ENCODE measurements at regions of chr16 and their contacts with region 1.

Region 1: GRCh38 chr16:30592871-30593270 is 7.4 kb upstream of the ZNF785 start:
- DNase-seq: no peak
- ATAC-seq: no peak
- H3K4me3 ChIP-seq: no peak overlapping the region
- H3K4me3 Mint-ChIP-seq: no peak overlapping the region
- H3K27ac ChIP-seq: no peak overlapping the region
- H3K27ac Mint-ChIP-seq: no peak overlapping the region
- H3K4me1 ChIP-seq: no peaks in the 10 kb centered on the region
- H3K4me1 Mint-ChIP-seq: peaks cover 0 to 1% (median 0%) of the 10 kb centered on the region in 3 donors
- H3K27me3 ChIP-seq: no peaks in the 10 kb centered on the region
- H3K27me3 Mint-ChIP-seq: no peaks in the 10 kb centered on the region

Region 2: GRCh38 chr16:30335598-30336474 is 257.0 kb before region 1 on chr16:
- CTCF ChIA-PET with region 1: no interaction called
- POLR2A ChIA-PET with region 1: no interaction called
- DNase-seq: peak in 5 of 35 experiments; percentile 14 to 59 (median 16)
- ATAC-seq: no peak
- H3K4me3 ChIP-seq: peak overlapping the region; percentile 47 to 58
- H3K4me3 Mint-ChIP-seq: peak overlapping the region; percentile 83 to 92 (median 91)
- H3K27ac ChIP-seq: peak overlapping the region; percentile 63
- H3K27ac Mint-ChIP-seq: peak overlapping the region; percentile 86 to 87
- H3K4me1 ChIP-seq: peaks cover 9 to 13% of the 10 kb centered on the region in 2 experiments
- H3K4me1 Mint-ChIP-seq: peaks cover 26 to 35% (median 26%) of the 10 kb centered on the region in 3 donors
- H3K27me3 ChIP-seq: no peaks in the 10 kb centered on the region
- H3K27me3 Mint-ChIP-seq: no peaks in the 10 kb centered on the region

Region 3: GRCh38 chr16:30466766-30467165 is 126.1 kb before region 1 on chr16:
- CTCF ChIA-PET with region 1: no interaction called
- POLR2A ChIA-PET with region 1: interaction called in 1 of 2 experiments, 10 read pairs
- DNase-seq: no peak
- ATAC-seq: no peak
- H3K4me3 ChIP-seq: no peak overlapping the region
- H3K4me3 Mint-ChIP-seq: peak overlapping the region in 1 of 3 donors; percentile 37
- H3K27ac ChIP-seq: no peak overlapping the region
- H3K27ac Mint-ChIP-seq: peak overlapping the region; percentile 79 to 80
- H3K4me1 ChIP-seq: peaks cover 18 to 46% of the 10 kb centered on the region in 2 experiments
- H3K4me1 Mint-ChIP-seq: peaks cover 39 to 47% (median 42%) of the 10 kb centered on the region in 3 donors
- H3K27me3 ChIP-seq: no peaks in the 10 kb centered on the region
- H3K27me3 Mint-ChIP-seq: no peaks in the 10 kb centered on the region

Region 4: DNA sequence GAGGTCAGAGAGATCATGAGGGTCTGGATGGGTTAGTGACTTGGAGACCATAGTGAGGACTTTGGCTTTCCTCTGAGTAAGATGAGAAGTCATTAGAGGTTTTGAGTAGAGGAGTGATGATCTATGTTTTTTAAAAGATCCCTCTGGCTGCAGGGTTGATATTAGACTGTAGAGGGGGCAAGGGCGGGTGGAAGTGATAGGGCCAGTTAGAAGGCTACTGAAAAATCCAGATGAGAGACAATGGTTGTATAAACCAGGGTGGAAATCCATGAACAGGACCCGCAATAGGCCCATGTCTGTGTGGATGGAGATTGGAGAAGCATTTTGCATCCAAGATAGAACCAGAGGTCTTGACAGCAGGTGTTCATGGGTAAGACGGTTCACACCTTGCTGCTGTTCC is 110.5 kb before region 1 on chr16:
- CTCF ChIA-PET with region 1: no interaction called
- POLR2A ChIA-PET with region 1: interaction called, 4 to 10 read pairs
- DNase-seq: peak in 5 of 35 experiments; percentile 13 to 36 (median 17)
- ATAC-seq: peak in 3 of 4 experiments; percentile 38 to 53 (median 51)
- H3K4me3 ChIP-seq: no peak overlapping the region
- H3K4me3 Mint-ChIP-seq: no peak overlapping the region
- H3K27ac ChIP-seq: no peak overlapping the region
- H3K27ac Mint-ChIP-seq: peak overlapping the region; percentile 77 to 86
- H3K4me1 ChIP-seq: peaks cover 0 to 81% of the 10 kb centered on the region in 2 experiments
- H3K4me1 Mint-ChIP-seq: peaks cover 42 to 61% (median 55%) of the 10 kb centered on the region in 3 donors
- H3K27me3 ChIP-seq: no peaks in the 10 kb centered on the region
- H3K27me3 Mint-ChIP-seq: no peaks in the 10 kb centered on the region

Region 5: GRCh38 chr16:30853758-30854157 is 260.9 kb after region 1 on chr16:
- CTCF ChIA-PET with region 1: no interaction called
- POLR2A ChIA-PET with region 1: no interaction called
- DNase-seq: no peak
- ATAC-seq: no peak
- H3K4me3 ChIP-seq: no peak overlapping the region
- H3K4me3 Mint-ChIP-seq: no peak overlapping the region
- H3K27ac ChIP-seq: no peak overlapping the region
- H3K27ac Mint-ChIP-seq: no peak overlapping the region
- H3K4me1 ChIP-seq: no peaks in the 10 kb centered on the region
- H3K4me1 Mint-ChIP-seq: no peaks in the 10 kb centered on the region
- H3K27me3 ChIP-seq: no peaks in the 10 kb centered on the region
- H3K27me3 Mint-ChIP-seq: no peaks in the 10 kb centered on the region